Dendritic cell treated with granulocyte-macrophage colony-stimulating factor and Interleukin-4, amounts not matched to agents 40 ng/mL and 50 ng/mL, for 4 days (primary cell): ENCODE measurements at regions of chr20 and their contacts with region 1.

Region 1: DNA sequence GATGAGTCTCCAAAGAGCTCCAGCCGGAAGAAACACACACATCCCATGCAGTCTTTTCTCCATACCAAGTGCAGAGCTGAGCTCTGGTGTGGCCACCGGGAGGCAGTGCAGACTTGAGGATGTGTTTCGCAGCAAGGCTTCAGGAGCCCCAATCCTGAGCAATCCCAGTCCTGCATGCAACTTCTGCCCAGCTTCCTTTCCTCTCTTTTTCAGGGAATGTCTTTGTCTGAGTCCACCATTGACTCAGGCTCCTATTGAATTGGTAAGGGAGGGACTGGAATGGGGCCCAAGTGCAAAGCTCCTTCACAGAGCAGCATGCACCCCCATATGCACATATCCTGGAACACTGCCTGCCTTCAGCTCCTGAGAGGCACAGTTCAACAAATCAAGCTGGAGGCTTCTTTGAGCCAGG is 50.5 kb upstream of the ASIP start:
- H3K4me3 Mint-ChIP-seq: no peak overlapping the region
- H3K27ac Mint-ChIP-seq: no peak overlapping the region
- H3K4me1 Mint-ChIP-seq: peaks cover 14% of the 10 kb centered on the region
- H3K27me3 Mint-ChIP-seq: peaks cover 34% of the 10 kb centered on the region

Region 2: DNA sequence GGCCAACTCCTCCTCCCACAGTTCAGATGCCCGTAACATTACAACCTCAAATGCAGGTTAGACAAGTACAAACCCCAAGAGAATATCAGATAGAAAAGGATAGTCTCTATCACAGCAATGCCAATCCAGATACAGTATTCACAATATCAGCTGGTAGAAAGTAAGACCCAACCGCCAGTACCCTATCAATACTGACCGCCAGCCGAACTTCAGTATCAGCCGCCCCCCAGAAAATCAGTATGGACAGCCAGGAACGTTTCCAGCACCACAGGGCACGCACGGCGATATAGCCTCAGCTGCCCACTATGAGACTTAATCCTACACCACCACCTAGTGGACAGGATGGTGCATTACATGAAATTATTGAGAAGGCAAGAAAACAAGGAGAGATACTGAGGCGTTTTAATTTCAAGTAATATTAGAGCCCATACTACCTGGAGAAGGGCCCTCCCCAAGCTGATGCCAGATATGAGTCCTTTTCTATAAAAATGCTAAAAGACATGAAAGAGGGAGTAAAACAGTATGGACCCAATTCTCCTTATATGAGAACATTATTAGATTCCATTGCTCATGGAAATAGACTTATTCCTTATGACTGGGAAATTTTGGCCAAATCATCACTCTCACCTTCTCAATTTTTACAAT is 61.0 kb before region 1 on chr20:
- intact Hi-C with region 1: no loop called
- H3K4me3 Mint-ChIP-seq: no peak overlapping the region
- H3K27ac Mint-ChIP-seq: no peak overlapping the region
- H3K4me1 Mint-ChIP-seq: peaks cover 5% of the 10 kb centered on the region
- H3K27me3 Mint-ChIP-seq: peaks cover 18% of the 10 kb centered on the region

Region 3: DNA sequence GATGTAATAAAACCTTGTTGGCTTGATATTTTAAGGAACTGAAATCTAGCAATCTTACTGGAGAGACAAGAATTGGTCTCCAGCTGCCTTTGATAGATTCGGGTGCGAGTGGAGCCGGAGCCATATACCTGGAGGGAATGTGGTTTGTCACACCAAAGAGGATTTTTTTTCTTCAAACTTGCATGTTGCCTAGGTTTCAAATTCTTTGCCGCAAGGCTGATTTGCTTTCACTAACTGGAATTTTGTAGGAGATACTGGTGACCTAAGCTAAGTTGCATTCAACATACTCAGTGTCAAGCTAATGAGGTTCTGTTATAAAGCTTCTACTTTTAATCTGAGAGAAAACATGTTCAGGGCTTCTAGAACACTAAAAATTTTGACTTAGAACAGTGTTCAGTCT is 10.8 kb after region 1 on chr20:
- intact Hi-C with region 1: no loop called
- H3K4me3 Mint-ChIP-seq: no peak overlapping the region
- H3K27ac Mint-ChIP-seq: no peak overlapping the region
- H3K4me1 Mint-ChIP-seq: peaks cover 15% of the 10 kb centered on the region
- H3K27me3 Mint-ChIP-seq: peaks cover 17% of the 10 kb centered on the region

Region 4: GRCh38 chr20:34254979-34255378 is 64.3 kb after region 1 on chr20:
- intact Hi-C with region 1: loop called (anchors 1 kb)
- H3K4me3 Mint-ChIP-seq: no peak overlapping the region
- H3K27ac Mint-ChIP-seq: no peak overlapping the region
- H3K4me1 Mint-ChIP-seq: peaks cover 26% of the 10 kb centered on the region
- H3K27me3 Mint-ChIP-seq: no peaks in the 10 kb centered on the region

Region 5: GRCh38 chr20:34522969-34523871 is 332.5 kb after region 1 on chr20:
- intact Hi-C with region 1: loop called (anchors 10 kb)
- H3K4me3 Mint-ChIP-seq: no peak overlapping the region
- H3K27ac Mint-ChIP-seq: no peak overlapping the region
- H3K4me1 Mint-ChIP-seq: peaks cover 39% of the 10 kb centered on the region
- H3K27me3 Mint-ChIP-seq: no peaks in the 10 kb centered on the region